ENCODE measurements at regions of chr11 and their contacts with region 1.

Region 1: GRCh38 chr11:36702330-36703055 is 104.5 kb upstream of the RAG2 start:
- DNase-seq: peak; percentile 63
- ATAC-seq: peak; percentile 99
- H3K4me3 ChIP-seq: no peak overlapping the region
- H3K27ac ChIP-seq: no peak overlapping the region
- H3K4me1 ChIP-seq: no peaks in the 10 kb centered on the region
- H3K27me3 ChIP-seq: no peaks in the 10 kb centered on the region; a peak in 1 of 5 replicates
- CTCF ChIP-seq: peak; percentile 84
- EP300 ChIP-seq: no peak
- POLR2A ChIP-seq: no peak
- RAD21 ChIP-seq: peak; percentile 67; the same call in 1 of the 2 replicates

Region 2: DNA sequence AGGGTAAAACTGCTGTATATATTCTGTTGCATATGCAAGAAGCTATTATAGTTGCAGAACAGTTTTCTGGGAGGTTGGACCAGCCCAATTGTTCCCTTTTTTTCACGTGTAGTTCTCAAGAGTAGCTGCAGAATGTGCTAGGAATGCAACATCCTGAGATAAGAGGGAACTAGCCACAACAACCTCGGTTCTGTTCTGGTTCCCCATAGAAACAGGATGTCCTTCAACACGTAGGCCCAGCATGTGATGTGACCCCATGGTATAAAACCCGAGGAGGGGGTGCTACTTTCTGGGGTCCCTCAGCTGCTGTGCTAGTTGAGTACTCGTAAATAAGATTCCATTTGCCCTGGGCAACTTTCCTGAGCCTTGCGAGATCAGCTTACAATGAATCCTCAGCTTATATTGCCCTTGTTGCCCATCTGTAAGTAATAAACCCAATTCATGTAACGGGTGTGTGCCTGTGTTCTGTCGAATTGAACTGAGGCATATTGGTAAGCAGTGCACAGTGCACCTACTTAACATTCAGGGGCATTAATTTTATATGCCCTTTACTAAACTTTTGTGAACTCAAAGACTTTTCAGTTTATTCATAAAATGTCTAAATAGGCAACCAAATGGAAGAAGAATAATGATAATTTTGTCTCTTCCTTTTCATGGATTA is 169.4 kb before region 1 on chr11:
- CTCF ChIA-PET with region 1: no interaction called
- POLR2A ChIA-PET with region 1: no interaction called
- in situ Hi-C with region 1: no loop called
- intact Hi-C with region 1: no loop called
- DNase-seq: no peak
- ATAC-seq: no peak
- H3K4me3 ChIP-seq: no peak overlapping the region
- H3K27ac ChIP-seq: no peak overlapping the region
- H3K4me1 ChIP-seq: no peaks in the 10 kb centered on the region
- H3K27me3 ChIP-seq: no peaks in the 10 kb centered on the region
- CTCF ChIP-seq: no peak
- EP300 ChIP-seq: no peak
- POLR2A ChIP-seq: no peak
- RAD21 ChIP-seq: no peak

Region 3: DNA sequence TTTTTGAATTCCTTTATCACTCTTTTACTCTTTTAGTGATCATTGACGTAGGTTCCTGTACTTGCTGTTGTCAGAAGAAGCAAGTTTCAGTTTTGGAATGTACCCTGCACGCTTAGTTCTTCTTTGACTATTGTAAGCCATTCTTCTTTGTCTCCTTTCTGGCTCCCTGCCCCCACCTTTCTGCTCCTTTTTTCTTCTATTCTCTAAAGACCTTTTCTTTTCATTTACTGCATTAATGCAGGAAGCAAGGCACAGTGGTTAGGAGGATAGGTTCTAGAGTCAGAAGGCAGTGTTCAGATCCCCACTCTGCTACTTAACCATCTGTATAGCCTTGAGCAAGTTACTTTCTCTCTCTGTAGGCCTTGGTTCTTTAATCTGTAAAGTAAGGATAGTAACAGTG is 70.7 kb before region 1 on chr11:
- CTCF ChIA-PET with region 1: no interaction called
- POLR2A ChIA-PET with region 1: no interaction called
- in situ Hi-C with region 1: loop called (anchors 10 kb)
- intact Hi-C with region 1: no loop called
- DNase-seq: no peak
- ATAC-seq: no peak
- H3K4me3 ChIP-seq: no peak overlapping the region
- H3K27ac ChIP-seq: no peak overlapping the region
- H3K4me1 ChIP-seq: no peaks in the 10 kb centered on the region
- H3K27me3 ChIP-seq: no peaks in the 10 kb centered on the region
- CTCF ChIP-seq: no peak
- EP300 ChIP-seq: no peak
- POLR2A ChIP-seq: no peak
- RAD21 ChIP-seq: no peak

Region 4: DNA sequence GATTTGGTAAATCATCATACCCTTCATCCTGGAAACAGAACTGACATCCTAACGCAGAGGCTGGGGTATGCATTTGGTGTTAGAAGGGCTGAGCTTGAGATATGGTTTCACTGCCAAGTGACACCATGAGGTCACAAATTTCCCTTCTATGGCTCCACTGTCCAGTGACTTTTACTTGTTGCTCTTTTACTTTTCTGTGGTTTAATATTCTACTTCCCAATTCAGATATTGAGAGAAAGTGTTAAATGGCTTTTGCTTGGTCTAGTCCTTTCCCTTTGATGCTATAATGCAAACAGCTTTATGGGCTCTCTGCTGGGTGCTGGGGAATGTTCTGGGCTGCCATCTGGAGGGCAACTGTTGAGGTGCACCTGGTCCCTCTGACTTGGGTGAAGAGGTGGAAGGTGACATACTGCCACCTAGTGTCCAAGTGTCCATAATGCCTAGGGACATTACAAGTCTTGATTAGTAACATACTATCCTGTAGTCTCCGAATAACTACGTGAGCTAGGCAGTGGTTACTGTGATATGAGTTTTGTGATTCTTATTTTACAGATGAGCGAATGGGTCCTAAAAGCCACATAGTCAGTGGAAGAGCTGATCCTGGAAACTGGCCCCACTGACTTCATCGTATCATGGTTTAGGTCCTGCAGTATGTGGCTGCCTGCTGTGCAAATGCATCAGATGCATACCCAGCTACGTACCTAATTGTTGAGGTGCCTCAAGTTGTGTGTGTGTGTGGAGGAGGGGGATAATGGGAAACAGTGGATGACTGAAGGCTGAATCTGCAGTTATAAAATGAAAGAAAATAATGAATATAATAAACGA is 44.6 kb after region 1 on chr11:
- CTCF ChIA-PET with region 1: interaction called, 106 read pairs
- POLR2A ChIA-PET with region 1: no interaction called
- in situ Hi-C with region 1: loop called (anchors 5 kb)
- intact Hi-C with region 1: loop called (anchors 1 kb)
- DNase-seq: peak; percentile 87
- ATAC-seq: peak; percentile 98
- H3K4me3 ChIP-seq: no peak overlapping the region
- H3K27ac ChIP-seq: no peak overlapping the region
- H3K4me1 ChIP-seq: no peaks in the 10 kb centered on the region
- H3K27me3 ChIP-seq: no peaks in the 10 kb centered on the region; a peak in 2 of 5 replicates
- CTCF ChIP-seq: peak; percentile 96
- EP300 ChIP-seq: no peak
- POLR2A ChIP-seq: no peak
- RAD21 ChIP-seq: peak; percentile 75

Measured in HepG2 (cell line).